CD4-positive, alpha-beta T cell (primary cell): ENCODE measurements at regions of chr11 and their contacts with region 1.

Region 1: GRCh38 chr11:118198370-118198769 is 21.9 kb upstream of the SCN2B start:
- DNase-seq: peak; percentile 73 to 90 (median 80)
- ATAC-seq: peak; percentile 38
- H3K4me3 ChIP-seq: no peak overlapping the region
- H3K4me3 Mint-ChIP-seq: no peak overlapping the region
- H3K27ac ChIP-seq: peak overlapping the region; percentile 3
- H3K27ac Mint-ChIP-seq: peak overlapping the region; percentile 52
- H3K4me1 ChIP-seq: peaks cover 43% of the 10 kb centered on the region
- H3K4me1 Mint-ChIP-seq: peaks cover 11% of the 10 kb centered on the region
- H3K27me3 ChIP-seq: no peaks in the 10 kb centered on the region
- H3K27me3 Mint-ChIP-seq: no peaks in the 10 kb centered on the region
- CTCF ChIP-seq: peak; percentile 92

Region 2: GRCh38 chr11:118227865-118228785 is 29.8 kb after region 1 on chr11:
- CTCF ChIA-PET with region 1: interaction called, 24 read pairs
- POLR2A ChIA-PET with region 1: interaction called, 13 read pairs
- intact Hi-C with region 1: loop called in 1 of 2 experiments (anchors 2 kb)
- DNase-seq: peak in 4 of 14 experiments; percentile 35 to 79 (median 70)
- ATAC-seq: peak; percentile 13
- H3K4me3 ChIP-seq: no peak overlapping the region
- H3K4me3 Mint-ChIP-seq: peak overlapping the region; percentile 76
- H3K27ac ChIP-seq: peak overlapping the region; percentile 54 to 68
- H3K27ac Mint-ChIP-seq: no peak overlapping the region
- H3K4me1 ChIP-seq: peaks cover 60% of the 10 kb centered on the region
- H3K4me1 Mint-ChIP-seq: peaks cover 33% of the 10 kb centered on the region
- H3K27me3 ChIP-seq: no peaks in the 10 kb centered on the region
- H3K27me3 Mint-ChIP-seq: no peaks in the 10 kb centered on the region
- CTCF ChIP-seq: no peak

Region 3: GRCh38 chr11:118251858-118252652 is 53.7 kb after region 1 on chr11 and contains the start of gene MPZL3:
- CTCF ChIA-PET with region 1: interaction called, 18 read pairs
- POLR2A ChIA-PET with region 1: interaction called, 10 read pairs
- intact Hi-C with region 1: loop called in 1 of 2 experiments (anchors 2 kb)
- DNase-seq: peak; percentile 72 to 96 (median 79)
- ATAC-seq: peak; percentile 86
- H3K4me3 ChIP-seq: peak within 1 kb of the TSS; percentile 79
- H3K4me3 Mint-ChIP-seq: peak within 1 kb of the TSS; percentile 96
- H3K27ac ChIP-seq: peak within 1 kb of the TSS; percentile 91 to 94
- H3K27ac Mint-ChIP-seq: peak within 1 kb of the TSS; percentile 98
- H3K4me1 ChIP-seq: peaks cover 13% of the 10 kb centered on the region
- H3K4me1 Mint-ChIP-seq: peaks cover 49% of the 10 kb centered on the region
- H3K27me3 ChIP-seq: no peaks in the 10 kb centered on the region
- H3K27me3 Mint-ChIP-seq: no peaks in the 10 kb centered on the region
- CTCF ChIP-seq: no peak
- total RNA-seq, gene MPZL3: 29.0 to 30.2 TPM

Region 4: DNA sequence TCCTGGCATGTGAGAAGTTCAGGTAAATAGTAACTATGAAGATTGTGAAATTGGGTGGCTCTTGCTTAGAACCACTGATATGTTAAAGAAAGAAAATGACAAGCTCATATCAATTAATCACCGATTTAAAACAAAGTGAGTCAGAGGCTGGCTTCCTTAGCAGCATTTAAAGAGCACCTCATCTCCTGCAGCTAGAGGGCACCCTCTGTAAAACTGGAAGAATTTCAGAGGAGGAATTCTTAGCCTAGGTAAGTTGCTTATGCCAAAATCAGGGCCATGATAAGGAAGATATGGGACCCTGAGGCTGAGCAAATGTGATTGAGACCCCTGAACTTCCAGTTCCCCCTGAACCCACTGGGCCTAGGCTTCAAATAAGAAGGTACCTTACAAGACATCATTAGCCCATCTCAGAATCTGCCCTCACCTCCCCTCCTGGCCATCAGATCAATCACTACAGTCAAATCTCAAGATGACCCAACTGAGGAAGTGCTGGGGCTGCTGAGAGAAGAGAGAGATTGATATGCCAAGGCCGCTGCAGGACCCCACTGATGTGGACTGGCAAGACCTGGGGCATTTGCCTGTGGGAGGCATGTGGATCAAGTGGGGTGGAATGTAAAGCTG is 97.6 kb after region 1 on chr11:
- CTCF ChIA-PET with region 1: interaction called, 31 read pairs
- POLR2A ChIA-PET with region 1: interaction called, 12 read pairs
- intact Hi-C with region 1: loop called (anchors 1 kb)
- DNase-seq: peak in 12 of 14 experiments; percentile 23 to 81 (median 45)
- ATAC-seq: peak; percentile 85
- H3K4me3 ChIP-seq: no peak overlapping the region
- H3K4me3 Mint-ChIP-seq: no peak overlapping the region
- H3K27ac ChIP-seq: no peak overlapping the region
- H3K27ac Mint-ChIP-seq: peak overlapping the region; percentile 29
- H3K4me1 ChIP-seq: peaks cover 12% of the 10 kb centered on the region
- H3K4me1 Mint-ChIP-seq: peaks cover 36% of the 10 kb centered on the region
- H3K27me3 ChIP-seq: no peaks in the 10 kb centered on the region
- H3K27me3 Mint-ChIP-seq: no peaks in the 10 kb centered on the region
- CTCF ChIP-seq: peak; percentile 76

Region 5: GRCh38 chr11:118338637-118339061 is 140.3 kb after region 1 on chr11:
- CTCF ChIA-PET with region 1: interaction called, 5 read pairs
- POLR2A ChIA-PET with region 1: no interaction called
- intact Hi-C with region 1: loop called in 1 of 2 experiments (anchors 5 kb)
- DNase-seq: peak; percentile 61 to 96 (median 86)
- ATAC-seq: peak; percentile 66
- H3K4me3 ChIP-seq: peak overlapping the region; percentile 86
- H3K4me3 Mint-ChIP-seq: peak overlapping the region; percentile 97
- H3K27ac ChIP-seq: peak overlapping the region; percentile 90
- H3K27ac Mint-ChIP-seq: peak overlapping the region; percentile 98
- H3K4me1 ChIP-seq: peaks cover 62% of the 10 kb centered on the region
- H3K4me1 Mint-ChIP-seq: peaks cover 70% of the 10 kb centered on the region
- H3K27me3 ChIP-seq: no peaks in the 10 kb centered on the region
- H3K27me3 Mint-ChIP-seq: no peaks in the 10 kb centered on the region
- CTCF ChIP-seq: no peak